ENCODE measurements at regions of chr2 and their contacts with region 1.

Region 1: DNA sequence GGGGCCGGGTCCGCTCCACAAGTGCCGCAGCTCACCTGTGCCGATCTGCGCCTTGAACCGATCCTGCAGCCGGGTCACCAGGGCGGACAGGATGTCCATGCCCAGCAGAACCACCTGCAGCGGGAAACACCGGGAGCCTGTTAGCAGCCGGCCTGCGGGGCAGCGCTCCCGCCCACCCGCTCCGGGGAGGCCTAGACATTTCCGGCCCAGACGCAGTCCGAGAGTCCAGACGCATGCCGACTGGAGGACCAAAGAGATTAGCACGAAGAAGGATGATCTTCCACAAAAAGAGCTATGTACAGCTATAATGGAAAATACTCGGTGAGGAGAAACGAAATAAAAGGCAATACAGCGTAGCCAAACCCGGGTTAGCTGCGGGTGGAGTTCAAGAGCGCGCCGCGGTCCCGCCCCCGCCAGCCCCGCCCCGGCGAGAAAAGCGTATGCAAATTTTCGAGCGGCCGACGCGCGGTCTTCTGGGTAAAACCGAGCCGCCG is 421 bp upstream of the RNU4ATAC start:
- DNase-seq: peak; percentile 90
- ATAC-seq: peak; percentile 63
- H3K4me3 Mint-ChIP-seq: peak overlapping the region; percentile 83
- H3K27ac Mint-ChIP-seq: peak overlapping the region; percentile 92
- H3K4me1 Mint-ChIP-seq: peaks cover 62% of the 10 kb centered on the region
- H3K27me3 Mint-ChIP-seq: no peaks in the 10 kb centered on the region
- CTCF ChIP-seq: no peak

Region 2: GRCh38 chr2:121076885-121077549 is 453.2 kb before region 1 on chr2:
- CTCF ChIA-PET with region 1: no interaction called
- POLR2A ChIA-PET with region 1: interaction called, 16 read pairs
- intact Hi-C with region 1: no loop called
- DNase-seq: peak; percentile 85
- ATAC-seq: peak; percentile 71
- H3K4me3 Mint-ChIP-seq: no peak overlapping the region
- H3K27ac Mint-ChIP-seq: no peak overlapping the region
- H3K4me1 Mint-ChIP-seq: no peaks in the 10 kb centered on the region
- H3K27me3 Mint-ChIP-seq: peaks cover 17% of the 10 kb centered on the region
- CTCF ChIP-seq: peak; percentile 95

Region 3: GRCh38 chr2:121519732-121520640 is 10.3 kb before region 1 on chr2:
- CTCF ChIA-PET with region 1: interaction called, 4 read pairs
- POLR2A ChIA-PET with region 1: interaction called, 18 read pairs
- intact Hi-C with region 1: no loop called
- DNase-seq: no peak
- ATAC-seq: no peak
- H3K4me3 Mint-ChIP-seq: no peak overlapping the region
- H3K27ac Mint-ChIP-seq: no peak overlapping the region
- H3K4me1 Mint-ChIP-seq: no peaks in the 10 kb centered on the region
- H3K27me3 Mint-ChIP-seq: no peaks in the 10 kb centered on the region
- CTCF ChIP-seq: no peak

Region 4: DNA sequence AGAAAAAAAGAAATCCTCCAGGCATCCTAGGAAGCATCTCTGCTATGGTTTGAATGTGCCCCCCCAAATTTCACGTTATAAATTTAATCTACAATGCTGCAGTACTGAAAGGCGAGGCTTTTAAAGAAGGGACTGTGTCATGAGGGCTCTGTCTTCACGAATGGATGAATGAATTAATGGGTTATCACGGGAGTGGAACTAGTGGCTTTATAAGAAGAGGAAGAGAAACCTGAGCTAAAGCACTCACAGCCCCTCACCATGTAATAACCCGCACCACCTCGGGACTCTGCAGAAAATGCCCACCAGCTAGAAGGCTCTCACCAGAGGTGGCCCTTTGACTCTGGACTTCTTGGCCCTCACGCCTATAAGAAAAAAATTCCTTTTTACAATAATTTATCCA is 28.1 kb after region 1 on chr2:
- CTCF ChIA-PET with region 1: interaction called, 3 read pairs
- POLR2A ChIA-PET with region 1: interaction called, 10 read pairs
- intact Hi-C with region 1: no loop called
- DNase-seq: no peak
- ATAC-seq: no peak
- H3K4me3 Mint-ChIP-seq: no peak overlapping the region
- H3K27ac Mint-ChIP-seq: no peak overlapping the region
- H3K4me1 Mint-ChIP-seq: peaks cover 42% of the 10 kb centered on the region
- H3K27me3 Mint-ChIP-seq: no peaks in the 10 kb centered on the region
- CTCF ChIP-seq: no peak

Region 5: GRCh38 chr2:121649596-121650314 is 119.5 kb after region 1 on chr2:
- CTCF ChIA-PET with region 1: interaction called, 22 read pairs
- POLR2A ChIA-PET with region 1: interaction called, 84 read pairs
- intact Hi-C with region 1: loop called (anchors 1 kb)
- DNase-seq: peak; percentile 97
- ATAC-seq: peak; percentile 96
- H3K4me3 Mint-ChIP-seq: peak overlapping the region; percentile 93
- H3K27ac Mint-ChIP-seq: peak overlapping the region; percentile 98
- H3K4me1 Mint-ChIP-seq: peaks cover 64% of the 10 kb centered on the region
- H3K27me3 Mint-ChIP-seq: no peaks in the 10 kb centered on the region
- CTCF ChIP-seq: no peak

Region 6: GRCh38 chr2:121722479-121722878 is 192.2 kb after region 1 on chr2:
- CTCF ChIA-PET with region 1: interaction called, 3 read pairs
- POLR2A ChIA-PET with region 1: interaction called, 11 read pairs
- intact Hi-C with region 1: loop called (anchors 5 kb)
- DNase-seq: peak; percentile 46
- ATAC-seq: peak; percentile 87
- H3K4me3 Mint-ChIP-seq: no peak overlapping the region
- H3K27ac Mint-ChIP-seq: peak overlapping the region; percentile 21
- H3K4me1 Mint-ChIP-seq: peaks cover 17% of the 10 kb centered on the region
- H3K27me3 Mint-ChIP-seq: no peaks in the 10 kb centered on the region
- CTCF ChIP-seq: no peak

Measured in activated CD8-positive, alpha-beta T cell treated with anti-CD3 and anti-CD28 coated beads for 36 hours (primary cell).